ENCODE measurements at regions of chr13 and their contacts with region 1.

Region 1: DNA sequence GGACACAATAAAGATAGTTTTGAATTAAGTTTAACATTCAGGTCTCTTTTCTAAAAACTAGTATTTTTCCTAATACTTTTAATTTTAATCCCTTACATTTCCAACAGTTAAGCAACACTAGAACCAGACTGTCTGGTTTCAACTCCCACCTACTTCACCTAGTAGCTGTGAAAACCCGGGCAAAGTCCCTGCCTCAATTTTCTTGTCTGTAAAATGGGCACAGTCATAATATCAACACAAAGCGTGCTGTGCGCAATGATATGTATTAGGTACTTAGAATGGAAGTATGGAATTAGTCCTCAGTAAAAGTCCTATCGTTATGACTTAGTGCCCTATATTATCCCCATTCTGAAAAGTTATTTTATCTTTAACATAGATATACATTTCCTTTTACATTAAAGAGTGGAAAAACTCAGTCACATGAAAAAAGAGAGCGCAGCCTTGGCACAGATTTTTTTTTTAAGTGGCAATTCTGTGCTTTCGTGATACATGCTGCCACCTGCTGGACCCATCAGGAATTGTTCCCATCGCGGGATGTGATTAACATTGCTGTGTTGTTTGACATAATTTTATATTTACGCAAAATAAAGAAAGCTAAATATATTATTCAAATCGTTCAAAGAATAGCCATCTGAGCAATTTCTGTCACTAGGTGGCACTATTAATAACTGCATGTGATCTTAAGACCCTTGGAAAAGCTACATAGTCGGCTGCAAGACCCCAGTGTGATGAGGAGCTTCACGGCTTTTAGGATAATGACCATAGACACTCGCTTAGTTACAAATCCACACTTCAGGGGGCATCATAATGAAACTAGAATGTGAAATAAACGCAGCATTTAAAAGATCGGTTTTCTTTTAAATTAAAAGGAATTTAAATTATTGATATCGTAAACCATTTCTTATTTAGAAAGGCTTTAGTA is 59.9 kb downstream of the LIG4 start:
- DNase-seq: no peak
- H3K4me3 ChIP-seq: no peak overlapping the region
- H3K27ac ChIP-seq: no peak overlapping the region
- H3K4me1 ChIP-seq: no peaks in the 10 kb centered on the region
- H3K27me3 ChIP-seq: no peaks in the 10 kb centered on the region
- CTCF ChIP-seq: peak; percentile 56 to 80 (median 66)
- POLR2A ChIP-seq: no peak

Region 2: DNA sequence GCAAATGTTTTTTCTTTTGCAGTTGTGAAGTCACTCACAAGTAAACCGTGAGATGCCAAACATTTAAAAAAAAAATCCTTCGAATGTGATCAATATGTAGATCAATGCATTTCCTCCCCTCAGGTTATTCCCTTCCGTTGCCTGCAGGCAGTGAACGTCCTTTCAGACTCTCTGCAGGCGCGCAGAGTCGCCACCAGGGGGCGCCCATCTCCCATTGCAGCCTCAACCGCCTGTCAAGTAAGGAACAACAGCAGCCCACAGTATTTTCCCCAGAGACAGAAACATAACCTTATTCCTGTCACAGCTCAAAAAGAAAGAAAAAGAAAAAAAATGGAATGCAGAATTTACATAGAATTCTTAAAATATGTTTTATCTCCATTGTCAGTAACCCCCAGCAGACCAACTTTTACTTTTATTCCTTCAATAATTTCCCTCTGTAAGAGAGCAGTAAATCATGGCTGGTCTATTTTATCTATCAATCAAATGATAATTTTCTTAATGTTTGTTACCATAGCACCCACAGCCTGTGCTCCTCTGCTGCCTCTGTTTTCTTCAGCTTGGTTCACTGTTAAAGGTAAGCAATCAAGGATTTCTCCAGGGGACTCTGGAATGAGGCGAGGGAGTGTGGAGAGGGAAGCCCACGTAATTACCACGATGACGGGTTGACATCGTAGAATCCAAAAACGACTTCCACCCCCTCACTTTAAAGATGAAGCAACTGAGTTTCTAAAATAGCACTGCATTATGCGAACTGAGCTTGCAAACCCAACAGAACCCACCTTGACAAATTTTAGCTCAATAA is 949.9 kb before region 1 on chr13:
- intact Hi-C with region 1: loop called (anchors 5 kb)
- DNase-seq: no peak
- H3K4me3 ChIP-seq: no peak overlapping the region
- H3K27ac ChIP-seq: no peak overlapping the region
- H3K4me1 ChIP-seq: peaks cover 0 to 13% (median 0%) of the 10 kb centered on the region in 3 donors
- H3K27me3 ChIP-seq: no peaks in the 10 kb centered on the region
- CTCF ChIP-seq: peak; percentile 80 to 95 (median 84)
- POLR2A ChIP-seq: no peak